Head of caudate nucleus (tissue), 42 donors: ENCODE measurements at regions of chr22 and their contacts with region 1.

Region 1: DNA sequence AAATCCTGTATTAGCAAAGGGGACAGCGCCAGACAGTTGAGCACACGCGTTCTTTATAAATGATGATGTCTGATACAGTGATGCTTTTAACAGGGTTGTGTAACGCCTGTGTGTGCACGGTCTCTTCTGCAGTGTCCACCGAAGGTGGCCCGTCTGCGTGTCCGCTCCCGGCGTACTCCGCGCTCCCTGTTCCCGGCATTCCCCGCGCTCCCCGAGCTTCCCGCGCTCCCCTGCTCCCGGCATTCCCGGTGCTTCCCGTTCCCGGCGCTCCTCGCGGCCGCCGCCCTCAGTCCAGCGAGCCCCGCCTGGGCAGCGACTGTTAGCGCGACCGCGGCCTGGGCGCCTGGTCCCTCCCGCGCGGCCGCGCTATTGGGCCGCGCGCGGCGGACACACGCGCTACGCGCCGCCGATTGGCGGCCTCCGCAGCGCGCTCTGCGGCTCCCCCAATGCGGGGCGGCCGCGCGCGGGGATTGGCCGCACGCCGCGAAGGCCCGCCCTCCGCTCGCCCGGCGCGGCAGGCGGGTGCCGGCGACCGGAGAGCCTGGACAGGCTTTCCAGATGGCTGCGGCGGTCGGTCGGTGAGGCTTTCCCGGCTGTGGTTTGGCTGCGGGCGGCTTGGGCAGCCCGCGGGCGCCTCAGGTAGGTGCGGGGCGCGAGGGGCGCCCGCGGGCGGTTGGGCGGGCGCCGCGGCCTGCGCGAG is at the start of gene DGCR8:
- DNase-seq: peak; percentile 85 to 98 (median 96)

Region 2: DNA sequence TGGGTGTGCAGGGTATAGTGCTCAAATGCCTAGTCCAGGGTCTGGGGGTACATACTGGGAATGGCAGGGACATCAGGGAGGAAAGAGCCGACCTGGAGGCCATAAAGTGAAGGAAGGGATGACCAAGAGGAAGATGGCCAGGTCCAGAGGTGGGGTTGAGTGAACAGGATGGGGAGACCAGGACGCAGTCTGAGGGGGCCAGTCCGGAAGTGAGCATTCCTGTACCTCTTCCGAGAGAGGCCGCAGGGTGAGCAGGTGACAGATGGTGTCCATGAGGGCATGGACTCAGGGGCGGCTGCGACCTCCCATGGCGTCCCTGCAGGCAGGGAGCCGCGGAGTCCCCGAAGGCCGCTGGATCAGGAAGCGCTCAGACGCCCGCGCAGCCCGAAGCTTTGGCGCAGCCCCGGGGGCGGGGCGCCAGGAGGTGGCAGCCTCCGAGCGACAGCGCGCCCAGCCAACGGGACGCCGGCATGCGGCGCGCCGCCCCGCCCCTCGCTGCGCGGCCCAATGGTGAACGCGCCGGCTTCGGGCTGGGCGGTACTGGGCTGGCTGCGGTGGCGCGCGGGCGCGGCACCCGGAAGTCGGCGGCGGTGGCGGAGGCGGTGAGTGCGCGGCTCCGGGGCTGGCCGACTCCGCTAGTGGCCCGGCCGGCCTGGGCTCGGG is 59.2 kb before region 1 on chr22 and contains the start of gene TANGO2:
- intact Hi-C with region 1: loop called (anchors 10 kb)
- DNase-seq: peak; percentile 77 to 98 (median 94)

Region 3: DNA sequence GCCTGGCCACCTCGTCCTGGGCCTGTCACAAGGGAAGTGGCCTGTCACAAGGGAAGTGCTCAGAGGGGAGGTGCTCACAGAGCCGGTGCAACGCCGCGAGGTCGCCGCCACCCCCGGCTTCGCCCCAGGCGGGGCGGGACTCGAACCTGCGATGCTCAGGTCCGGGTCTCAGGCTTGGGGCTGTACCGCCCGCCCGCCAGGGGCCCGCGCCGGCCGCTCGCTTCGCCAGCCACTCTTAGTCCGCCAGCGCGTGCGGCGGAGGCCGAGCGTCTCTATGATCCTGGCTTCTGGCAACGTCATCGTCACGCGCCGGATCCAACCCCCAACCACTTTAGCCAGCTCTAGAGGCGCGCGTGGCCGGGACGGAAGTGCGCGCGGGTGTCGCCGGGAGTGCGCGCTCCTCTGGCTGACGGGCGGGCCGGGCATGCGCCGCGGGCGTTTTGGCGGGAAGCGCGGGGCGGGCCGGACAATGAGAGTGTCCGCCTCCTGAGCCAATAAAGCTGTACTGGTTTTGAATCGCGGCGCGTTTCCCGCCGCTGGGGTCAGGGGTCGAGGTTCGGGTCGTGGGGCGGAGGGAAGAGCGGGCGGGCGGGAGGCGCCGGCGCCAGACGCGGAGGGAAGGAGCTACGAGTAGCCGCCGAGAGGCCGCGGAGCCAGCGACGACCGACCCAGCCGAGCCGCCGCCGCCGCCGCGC is 37.2 kb after region 1 on chr22 and contains the start of gene TRMT2A:
- intact Hi-C with region 1: loop called (anchors 2 kb)
- DNase-seq: peak; percentile 91 to 99 (median 97)